Right lobe of liver (tissue), 6 donors: ENCODE measurements at regions of chr1 and their contacts with region 1.

Region 1: GRCh38 chr1:64691626-64692025 is 53.2 kb upstream of the RAVER2 start:
- DNase-seq: no peak
- ATAC-seq: no peak
- H3K4me3 ChIP-seq: no peak overlapping the region
- H3K27ac ChIP-seq: no peak overlapping the region
- H3K4me1 ChIP-seq: no peaks in the 10 kb centered on the region
- H3K27me3 ChIP-seq: no peaks in the 10 kb centered on the region
- CTCF ChIP-seq: no peak
- POLR2A ChIP-seq: no peak

Region 2: DNA sequence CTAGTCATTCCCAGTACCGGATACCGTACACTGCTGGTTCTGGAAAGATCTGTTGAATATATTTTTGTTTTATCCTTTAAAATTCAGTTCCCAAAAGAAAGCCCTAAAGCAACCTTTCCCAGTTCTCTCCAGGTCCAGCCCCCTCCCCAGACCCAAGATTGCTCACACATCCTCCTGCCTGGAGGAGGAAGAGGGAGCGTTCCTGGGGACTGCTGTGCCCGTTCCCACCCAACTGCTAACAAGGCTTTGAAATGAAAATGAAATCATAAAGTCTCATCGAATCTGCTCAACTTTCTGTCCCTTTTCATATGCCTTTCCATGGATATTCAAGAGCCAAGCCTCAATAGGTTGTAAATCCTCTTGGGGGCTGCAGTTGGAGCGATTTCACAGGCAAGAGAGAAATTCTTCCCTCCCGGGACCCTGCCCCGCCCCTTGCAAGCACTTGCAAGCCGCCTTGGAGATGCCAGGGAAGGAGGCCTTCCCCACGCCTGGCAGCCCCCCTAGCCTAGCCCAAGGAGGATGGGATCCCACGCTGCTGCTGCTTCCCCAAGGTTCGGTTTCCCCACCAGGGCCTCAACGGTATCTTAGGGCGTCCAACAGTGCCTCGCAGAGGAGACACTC is 334.9 kb before region 1 on chr1:
- intact Hi-C with region 1: no loop called
- DNase-seq: no peak
- ATAC-seq: no peak
- H3K4me3 ChIP-seq: no peak overlapping the region
- H3K27ac ChIP-seq: no peak overlapping the region
- H3K4me1 ChIP-seq: no peaks in the 10 kb centered on the region
- H3K27me3 ChIP-seq: no peaks in the 10 kb centered on the region
- CTCF ChIP-seq: no peak
- POLR2A ChIP-seq: no peak

Region 3: GRCh38 chr1:64823691-64824476 is 132.3 kb after region 1 on chr1:
- intact Hi-C with region 1: loop called in 1 of 2 experiments (anchors 10 kb)
- DNase-seq: peak in 1 of 3 donors; percentile 62
- ATAC-seq: peak; percentile 86 to 94 (median 90)
- H3K4me3 ChIP-seq: no peak overlapping the region
- H3K27ac ChIP-seq: no peak overlapping the region
- H3K4me1 ChIP-seq: no peaks in the 10 kb centered on the region
- H3K27me3 ChIP-seq: no peaks in the 10 kb centered on the region
- CTCF ChIP-seq: peak; percentile 85 to 91 (median 88)
- POLR2A ChIP-seq: no peak